Tibial artery (tissue), 4 donors: ENCODE measurements at regions of chr5 and their contacts with region 1.

Region 1: DNA sequence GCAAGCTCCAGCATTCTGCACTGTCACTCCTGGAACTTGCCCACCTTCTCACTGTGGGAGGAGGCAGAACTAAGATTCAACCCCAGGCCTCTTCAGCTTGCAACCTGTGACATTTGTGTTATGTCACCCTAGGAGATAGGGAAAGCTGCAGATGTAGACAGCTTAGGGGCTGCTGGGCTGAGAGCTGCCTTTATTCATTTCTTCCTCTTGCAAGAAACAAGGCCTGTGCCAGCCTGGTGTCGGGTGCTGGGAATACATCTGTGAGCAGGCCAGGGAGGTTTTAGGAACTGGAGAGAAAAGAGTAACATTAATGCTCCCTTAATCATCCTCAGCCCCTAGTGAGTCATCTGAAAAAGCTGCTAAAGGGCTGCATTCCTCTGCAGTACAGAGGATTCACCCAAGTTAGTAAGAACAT is 101.8 kb downstream of the FGF18 start:
- DNase-seq: peak; percentile 67 to 81
- H3K4me3 ChIP-seq: no peak overlapping the region
- H3K27ac ChIP-seq: peak overlapping the region; percentile 62 to 71
- H3K4me1 ChIP-seq: peaks cover 0 to 37% (median 35%) of the 10 kb centered on the region in 4 donors
- H3K27me3 ChIP-seq: no peaks in the 10 kb centered on the region
- CTCF ChIP-seq: peak; percentile 30 to 38

Region 2: DNA sequence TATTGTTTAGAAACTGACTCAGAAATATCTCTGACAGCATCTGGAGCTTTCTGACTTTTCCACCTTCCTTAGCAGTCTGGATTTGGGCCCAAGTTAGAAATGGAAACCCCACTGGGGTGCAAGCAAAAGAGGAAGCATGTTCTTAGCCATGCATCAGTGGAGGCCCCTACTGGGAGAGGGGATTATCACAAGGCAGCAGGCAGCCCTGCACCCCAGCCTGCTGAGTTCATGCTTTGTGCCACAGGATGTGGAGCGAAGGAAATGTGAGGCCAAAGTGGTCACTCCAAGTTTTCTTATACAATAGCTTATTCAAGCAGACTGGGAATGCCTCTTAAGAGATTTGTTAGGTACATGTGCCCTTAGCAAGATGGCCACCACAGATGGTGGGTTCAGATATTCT is 358.6 kb before region 1 on chr5:
- intact Hi-C with region 1: no loop called
- DNase-seq: no peak
- H3K4me3 ChIP-seq: no peak overlapping the region
- H3K27ac ChIP-seq: no peak overlapping the region
- H3K4me1 ChIP-seq: no peaks in the 10 kb centered on the region
- H3K27me3 ChIP-seq: no peaks in the 10 kb centered on the region
- CTCF ChIP-seq: no peak

Region 3: DNA sequence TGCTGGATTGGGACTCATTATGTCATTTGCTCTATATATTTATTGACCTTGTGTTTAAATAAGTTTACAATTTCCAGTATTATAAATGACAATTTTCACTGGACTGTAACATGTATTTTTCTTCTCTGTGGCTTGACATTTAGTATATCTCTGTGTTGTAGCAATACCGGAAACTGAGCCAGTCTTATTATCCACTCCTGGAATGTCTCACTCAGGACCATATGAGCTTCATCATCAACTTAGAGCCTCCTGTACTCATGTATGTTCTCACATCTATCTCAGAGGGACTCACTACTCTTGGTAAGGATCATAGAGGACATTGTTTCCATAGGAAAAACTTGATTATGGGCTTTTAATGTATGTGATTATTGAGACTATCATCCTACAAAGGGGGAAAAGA is 278.7 kb before region 1 on chr5:
- intact Hi-C with region 1: loop called (anchors 5 kb)
- DNase-seq: no peak
- H3K4me3 ChIP-seq: no peak overlapping the region
- H3K27ac ChIP-seq: no peak overlapping the region
- H3K4me1 ChIP-seq: peaks cover 0 to 11% (median 1%) of the 10 kb centered on the region in 4 donors
- H3K27me3 ChIP-seq: no peaks in the 10 kb centered on the region
- CTCF ChIP-seq: no peak

Region 4: DNA sequence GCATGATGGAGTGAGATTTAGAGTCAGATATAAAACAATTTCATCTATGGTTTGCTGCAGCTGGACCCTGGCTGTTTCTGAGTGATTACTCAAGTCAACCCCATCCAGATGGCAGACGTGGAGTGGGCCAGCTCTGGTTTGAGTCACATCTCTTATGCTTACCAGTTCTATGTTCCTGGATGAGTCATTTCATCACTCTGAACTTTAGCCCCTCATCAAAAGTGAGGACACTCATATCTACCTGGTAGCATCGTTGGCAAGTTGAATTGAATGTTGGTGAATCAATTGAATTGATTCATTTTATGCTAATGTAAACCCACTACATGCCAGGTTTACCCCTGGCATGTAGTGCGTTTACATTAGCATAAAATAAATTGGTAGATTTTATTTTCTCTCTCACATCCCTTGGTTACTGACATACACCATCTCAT is 74.6 kb after region 1 on chr5:
- intact Hi-C with region 1: loop called (anchors 10 kb)
- DNase-seq: peak in 1 of 2 donors; percentile 54
- H3K4me3 ChIP-seq: no peak overlapping the region
- H3K27ac ChIP-seq: peak overlapping the region; percentile 51
- H3K4me1 ChIP-seq: peaks cover 0 to 20% (median 17%) of the 10 kb centered on the region in 4 donors
- H3K27me3 ChIP-seq: no peaks in the 10 kb centered on the region
- CTCF ChIP-seq: no peak

Region 5: GRCh38 chr5:172303572-172304335 is 782.5 kb after region 1 on chr5:
- intact Hi-C with region 1: no loop called
- DNase-seq: no peak
- H3K4me3 ChIP-seq: no peak overlapping the region
- H3K27ac ChIP-seq: no peak overlapping the region
- H3K4me1 ChIP-seq: peaks cover 0 to 17% (median 6%) of the 10 kb centered on the region in 4 donors
- H3K27me3 ChIP-seq: no peaks in the 10 kb centered on the region
- CTCF ChIP-seq: no peak

Region 6: DNA sequence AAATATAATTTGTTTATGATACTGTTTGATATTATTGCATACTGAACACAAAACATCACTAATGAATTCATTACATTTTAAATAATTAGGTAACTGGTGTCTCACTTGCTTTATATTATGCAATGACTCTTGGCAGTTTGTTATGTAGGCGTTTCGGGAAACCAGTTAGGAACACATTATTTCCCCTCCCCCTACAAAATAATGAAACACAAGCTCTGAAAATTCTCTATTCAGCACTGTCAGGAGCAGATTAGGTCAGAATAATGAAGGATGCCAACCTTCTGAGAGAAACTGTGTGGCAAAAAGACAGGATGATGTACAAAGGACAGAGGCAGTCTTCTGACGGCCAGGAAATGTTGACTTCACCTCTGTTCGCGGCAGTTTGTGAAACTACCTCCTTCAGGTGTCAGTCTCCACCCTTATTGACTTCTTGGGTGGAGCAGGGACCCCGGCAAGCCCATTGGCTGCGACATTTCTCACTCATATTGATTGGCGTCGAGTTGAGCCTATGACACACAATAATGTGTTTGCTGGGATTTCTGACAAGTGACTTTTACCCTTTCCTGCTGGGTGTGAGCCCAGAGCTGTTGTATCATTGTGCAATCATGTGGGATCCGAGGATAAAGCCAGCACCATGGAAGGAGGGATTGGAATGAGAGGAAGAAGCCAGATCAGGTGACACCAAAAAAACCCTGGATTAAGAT is 899.2 kb after region 1 on chr5:
- intact Hi-C with region 1: no loop called
- DNase-seq: peak; percentile 89 to 91
- H3K4me3 ChIP-seq: no peak overlapping the region
- H3K27ac ChIP-seq: peak overlapping the region; percentile 82 to 90
- H3K4me1 ChIP-seq: peaks cover 0 to 71% (median 43%) of the 10 kb centered on the region in 4 donors
- H3K27me3 ChIP-seq: no peaks in the 10 kb centered on the region
- CTCF ChIP-seq: no peak